ENCODE measurements at regions of chrX and their contacts with region 1.

Region 1: DNA sequence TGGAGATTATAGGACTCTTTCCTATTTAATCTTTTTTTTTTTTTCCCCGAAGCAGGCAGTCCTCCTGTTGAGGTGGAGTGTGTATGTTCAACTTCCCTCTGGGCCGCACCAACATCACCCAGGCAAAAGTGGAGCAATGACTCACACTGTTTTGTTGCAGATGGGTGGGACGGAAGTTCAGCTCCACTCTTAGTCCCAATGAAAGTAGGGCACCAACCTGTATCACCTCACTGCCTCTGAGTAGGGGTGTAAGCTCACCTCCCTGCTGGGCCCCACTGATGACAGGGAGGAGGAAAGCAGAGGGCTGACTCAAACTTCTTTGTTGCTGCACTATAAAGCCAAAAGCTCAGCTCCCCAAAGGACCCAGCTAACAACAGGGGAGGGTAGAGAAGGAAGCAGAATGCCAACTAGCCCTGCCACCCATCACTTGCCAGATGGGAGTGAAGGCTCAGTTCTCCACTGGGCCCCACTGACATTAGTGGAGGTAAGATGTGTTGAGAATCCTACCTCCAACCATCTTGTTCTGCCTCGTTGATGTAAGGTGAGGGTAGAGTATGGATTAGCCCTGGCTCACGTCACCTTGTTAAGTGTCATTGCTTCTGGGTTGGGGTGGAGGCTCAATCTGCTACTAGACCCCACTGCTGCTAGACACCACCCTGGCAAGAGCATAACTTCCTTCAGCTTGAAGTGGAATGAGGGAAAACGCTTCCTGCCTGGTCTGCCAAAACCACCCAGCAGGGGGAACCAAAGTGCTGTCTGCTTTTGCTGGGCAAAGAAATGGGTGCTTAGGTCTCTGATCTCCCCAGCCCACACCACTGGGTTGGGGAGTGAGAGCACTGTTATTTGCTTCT is 14.1 kb downstream of the RPS6KA3 start:
- DNase-seq: peak; percentile 61
- ATAC-seq: peak; percentile 85 to 88
- H3K4me3 ChIP-seq: no peak overlapping the region
- H3K27ac ChIP-seq: peak overlapping the region; percentile 24
- H3K4me1 ChIP-seq: peaks cover 11% of the 10 kb centered on the region
- H3K27me3 ChIP-seq: no peaks in the 10 kb centered on the region
- CTCF ChIP-seq: peak; percentile 61

Region 2: GRCh38 chrX:20442597-20442996 is 190.0 kb after region 1 on chrX:
- intact Hi-C with region 1: loop called (anchors 5 kb)
- DNase-seq: peak; percentile 88
- ATAC-seq: peak; percentile 93
- H3K4me3 ChIP-seq: no peak overlapping the region
- H3K27ac ChIP-seq: no peak overlapping the region
- H3K4me1 ChIP-seq: peaks cover 12% of the 10 kb centered on the region
- H3K27me3 ChIP-seq: no peaks in the 10 kb centered on the region
- CTCF ChIP-seq: peak; percentile 62

Measured in lower lobe of right lung (tissue), 2 donors.